Common myeloid progenitor, CD34-positive (primary cell): ENCODE measurements at regions of chr10 and their contacts with region 1.

Region 1: DNA sequence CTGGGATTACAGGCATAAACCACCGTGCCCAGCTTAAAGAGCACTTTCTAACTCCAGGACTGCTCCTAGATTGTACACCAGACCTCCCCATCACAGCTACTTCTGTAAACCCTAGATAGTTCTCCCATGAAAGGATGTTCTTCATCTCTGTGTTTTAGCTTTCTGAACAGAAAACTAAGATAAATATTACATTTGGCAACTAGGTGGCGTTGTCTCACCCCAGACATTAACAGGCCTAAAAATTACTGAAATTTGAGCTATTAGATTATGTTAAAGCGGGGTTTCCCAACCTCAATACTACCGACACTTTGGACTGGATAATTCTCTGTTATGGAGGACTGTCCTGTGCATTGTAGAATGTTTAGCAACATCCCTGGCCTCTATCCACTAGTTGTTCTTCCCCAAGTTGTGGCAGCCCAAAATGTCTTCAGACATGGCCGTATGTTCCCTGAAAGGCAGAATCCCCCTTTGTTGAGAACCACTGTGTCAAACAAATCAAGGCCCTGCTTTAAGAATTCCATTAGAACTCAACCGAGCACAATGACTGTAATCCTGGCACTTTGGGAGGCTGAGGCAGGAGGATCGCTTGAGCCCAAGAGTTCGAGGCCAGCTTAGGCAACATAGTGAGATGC is 19.1 kb downstream of the ATOH7 start:
- DNase-seq: peak; percentile 30 to 61 (median 45)
- H3K4me3 ChIP-seq: no peak overlapping the region
- H3K27ac ChIP-seq: no peak overlapping the region
- H3K4me1 ChIP-seq: no peaks in the 10 kb centered on the region
- H3K27me3 ChIP-seq: no peaks in the 10 kb centered on the region

Region 2: GRCh38 chr10:67936416-67936815 is 276.4 kb before region 1 on chr10:
- CTCF ChIA-PET with region 1: no interaction called
- POLR2A ChIA-PET with region 1: no interaction called
- DNase-seq: no peak
- H3K4me3 ChIP-seq: no peak overlapping the region
- H3K27ac ChIP-seq: no peak overlapping the region
- H3K4me1 ChIP-seq: peaks cover 0 to 10% (median 5%) of the 10 kb centered on the region in 4 experiments
- H3K27me3 ChIP-seq: no peaks in the 10 kb centered on the region

Region 3: DNA sequence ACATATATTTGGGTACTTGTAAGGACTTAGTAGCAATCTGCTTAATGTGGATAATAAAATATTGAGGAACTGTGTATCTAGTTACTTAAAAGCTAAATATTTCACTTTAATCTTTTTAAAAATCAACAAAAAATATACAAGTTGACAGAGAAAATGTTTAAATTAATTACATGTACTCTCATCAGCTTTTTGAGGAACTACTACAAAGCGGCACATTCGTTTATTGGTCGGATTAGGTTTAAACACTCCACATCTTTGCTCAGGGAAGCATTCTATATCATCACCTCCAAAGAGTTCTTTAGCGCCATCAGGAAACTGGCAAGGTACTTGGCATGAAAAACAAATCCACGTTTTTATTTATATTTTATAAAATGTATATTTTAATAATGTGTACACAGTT is 17.4 kb after region 1 on chr10:
- CTCF ChIA-PET with region 1: interaction called, 13 read pairs
- POLR2A ChIA-PET with region 1: no interaction called
- DNase-seq: no peak
- H3K4me3 ChIP-seq: no peak overlapping the region
- H3K27ac ChIP-seq: no peak overlapping the region
- H3K4me1 ChIP-seq: peaks cover 3 to 15% (median 13%) of the 10 kb centered on the region in 4 experiments
- H3K27me3 ChIP-seq: peaks cover 3 to 28% (median 7%) of the 10 kb centered on the region in 5 experiments

Region 4: DNA sequence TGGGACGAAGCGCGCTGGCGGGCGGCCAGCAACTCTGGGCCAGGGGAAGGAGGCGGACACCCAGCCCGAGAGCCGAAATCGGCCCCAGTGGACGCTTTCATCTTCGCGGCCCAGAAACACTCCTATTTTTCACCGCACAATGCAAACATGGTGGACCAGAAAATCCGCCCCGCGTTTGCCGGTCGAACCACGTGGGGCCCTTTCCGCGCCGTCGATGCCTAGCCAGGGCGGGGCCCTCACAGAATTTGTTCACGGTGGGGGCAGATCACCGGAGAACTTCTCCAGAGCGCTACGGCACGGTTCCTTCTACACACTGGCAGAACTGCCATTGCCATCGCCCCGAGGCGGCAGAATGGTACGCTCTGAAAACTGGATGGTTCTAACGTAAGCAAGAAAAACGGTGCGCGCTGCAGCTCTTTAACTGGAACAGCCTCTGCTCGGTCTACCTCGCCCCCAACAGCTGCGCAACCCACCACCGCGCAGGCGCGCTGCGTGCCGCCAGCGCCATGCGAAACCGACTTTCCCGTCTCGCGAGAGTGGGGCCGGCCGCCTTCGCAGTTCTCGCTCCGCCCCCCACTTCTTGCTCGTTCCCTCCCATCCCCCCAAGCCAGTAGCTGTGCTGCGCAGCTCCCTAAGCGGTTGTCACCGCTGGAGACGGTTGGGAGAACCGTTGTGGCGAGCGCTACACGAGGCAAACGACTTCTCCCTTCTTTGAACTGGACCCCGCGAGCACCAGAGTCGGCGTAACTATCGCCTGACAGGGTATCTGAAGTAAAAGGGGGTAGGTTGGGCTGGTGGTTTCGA is 118.8 kb after region 1 on chr10 and contains the start of gene HNRNPH3:
- CTCF ChIA-PET with region 1: interaction called, 15 read pairs
- POLR2A ChIA-PET with region 1: no interaction called
- DNase-seq: peak; percentile 98 to 99 (median 99)
- H3K4me3 ChIP-seq: peak within 1 kb of the TSS; percentile 80 to 98 (median 97)
- H3K27ac ChIP-seq: peak within 1 kb of the TSS; percentile 96 to 98
- H3K4me1 ChIP-seq: peaks cover 33 to 63% (median 52%) of the 10 kb centered on the region in 4 experiments
- H3K27me3 ChIP-seq: no peaks in the 10 kb centered on the region